ENCODE measurements at regions of chr2 and their contacts with region 1.

Region 1: DNA sequence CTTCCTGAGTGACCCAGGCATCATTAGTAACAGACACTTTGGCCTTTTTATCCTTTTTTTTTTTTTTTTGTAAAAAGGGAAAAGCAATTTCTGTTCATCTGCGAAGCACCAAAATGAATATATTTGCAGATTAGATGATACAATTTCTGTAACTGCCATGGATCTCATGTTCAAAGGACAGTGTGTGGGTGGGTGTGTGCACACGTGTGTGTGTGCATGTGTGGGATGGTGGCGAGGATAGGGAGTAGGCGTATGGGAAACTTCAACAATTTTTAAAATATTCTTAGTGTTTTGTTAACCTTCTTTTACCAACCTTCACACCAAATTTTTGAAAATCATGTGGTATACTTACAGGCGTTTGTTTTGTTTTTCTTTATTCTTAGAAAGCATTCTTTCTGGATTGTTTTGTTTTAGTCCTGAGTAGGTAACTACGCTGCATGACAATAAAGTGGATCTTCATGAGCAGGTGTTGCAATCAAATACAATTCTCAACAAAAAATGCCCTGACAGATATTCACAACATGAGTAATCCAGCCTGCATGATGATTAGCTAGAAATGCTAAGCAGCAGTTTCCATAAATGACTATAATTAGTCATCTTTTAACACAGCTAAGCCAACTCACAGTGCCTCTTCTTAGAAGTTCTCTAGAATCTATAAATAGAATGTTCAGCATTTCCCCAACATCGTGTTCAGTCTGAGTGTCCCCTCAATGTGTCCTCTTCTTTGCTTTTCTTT is 53.5 kb upstream of the RMDN2 start:
- DNase-seq: peak; percentile 14
- H3K4me3 ChIP-seq: no peak overlapping the region
- H3K27ac ChIP-seq: no peak overlapping the region
- H3K27me3 ChIP-seq: no peaks in the 10 kb centered on the region
- CTCF ChIP-seq: no peak

Region 2: DNA sequence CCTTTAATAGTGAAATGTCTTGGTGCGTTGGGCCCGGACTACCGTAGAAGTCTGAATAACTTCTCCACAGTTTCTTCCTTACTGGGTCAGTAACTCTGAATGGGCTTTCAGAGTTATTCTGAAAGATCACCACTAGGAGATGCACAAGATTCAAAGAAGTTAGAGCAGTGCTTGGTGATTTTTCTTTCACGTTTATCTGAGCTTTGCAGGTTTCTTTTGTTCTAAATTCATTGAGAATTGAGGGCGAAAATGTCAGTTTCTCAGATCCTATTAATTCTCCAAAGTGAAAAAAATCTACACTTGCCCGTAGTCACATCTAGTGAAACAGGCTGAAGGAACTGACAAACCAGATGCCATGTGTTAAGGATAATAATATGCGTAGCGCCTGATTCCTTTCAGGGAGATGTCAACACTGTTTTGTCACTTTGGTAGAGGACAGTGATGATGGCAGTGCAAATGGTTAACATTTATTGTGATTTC is 457.1 kb before region 1 on chr2:
- in situ Hi-C with region 1: loop called (anchors 25 kb)
- DNase-seq: peak; percentile 38
- H3K4me3 ChIP-seq: no peak overlapping the region
- H3K27ac ChIP-seq: no peak overlapping the region
- H3K27me3 ChIP-seq: no peaks in the 10 kb centered on the region
- CTCF ChIP-seq: peak; percentile 76

Region 3: DNA sequence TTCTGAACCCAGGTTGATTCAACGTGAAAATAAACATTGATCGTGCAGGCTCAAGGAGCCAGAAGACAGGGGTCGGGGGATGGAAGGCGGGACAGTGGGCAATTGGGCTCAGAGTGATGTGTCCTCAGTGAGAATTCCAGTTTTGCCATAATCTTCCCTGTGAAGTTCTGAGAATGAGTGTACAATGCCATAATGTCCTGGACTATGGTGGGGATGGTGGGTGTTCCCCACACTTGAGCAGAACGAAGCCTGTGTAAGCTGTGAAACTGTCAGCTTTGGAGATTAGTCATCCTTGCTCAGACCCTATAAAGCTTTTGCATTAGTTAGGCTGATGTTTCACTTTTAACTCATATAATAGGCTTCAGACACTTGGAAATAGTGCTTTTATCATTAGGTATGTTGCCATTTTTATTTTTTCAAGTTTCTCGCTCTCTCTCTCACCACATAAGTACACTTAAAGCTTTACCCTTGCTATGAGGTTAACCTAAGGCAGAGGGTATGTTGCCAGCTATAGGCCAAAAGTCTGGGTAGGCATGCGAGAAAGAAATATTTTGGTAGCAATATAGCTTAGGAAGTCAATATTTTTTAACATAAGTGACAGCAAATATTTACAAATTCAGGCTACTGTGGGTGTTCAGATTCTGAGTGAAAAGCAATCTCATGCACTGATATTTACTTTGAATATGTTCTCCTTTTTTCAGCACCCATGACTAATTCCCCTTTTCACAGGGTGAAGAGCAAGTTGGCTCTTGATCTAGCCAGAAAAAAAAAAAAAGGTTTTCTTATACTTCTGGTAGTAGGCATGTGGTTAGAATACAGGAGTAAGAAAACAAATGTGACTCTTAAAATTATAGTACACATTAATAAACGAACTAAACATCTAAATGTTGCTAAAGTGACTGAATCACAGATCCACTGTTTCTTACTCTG is 247.4 kb before region 1 on chr2:
- in situ Hi-C with region 1: no loop called
- DNase-seq: peak; percentile 52
- H3K4me3 ChIP-seq: no peak overlapping the region
- H3K27ac ChIP-seq: peak overlapping the region; percentile 70
- H3K27me3 ChIP-seq: no peaks in the 10 kb centered on the region
- CTCF ChIP-seq: no peak